Panc1 (cell line): ENCODE measurements at regions of chr10 and their contacts with region 1.

Region 1: DNA sequence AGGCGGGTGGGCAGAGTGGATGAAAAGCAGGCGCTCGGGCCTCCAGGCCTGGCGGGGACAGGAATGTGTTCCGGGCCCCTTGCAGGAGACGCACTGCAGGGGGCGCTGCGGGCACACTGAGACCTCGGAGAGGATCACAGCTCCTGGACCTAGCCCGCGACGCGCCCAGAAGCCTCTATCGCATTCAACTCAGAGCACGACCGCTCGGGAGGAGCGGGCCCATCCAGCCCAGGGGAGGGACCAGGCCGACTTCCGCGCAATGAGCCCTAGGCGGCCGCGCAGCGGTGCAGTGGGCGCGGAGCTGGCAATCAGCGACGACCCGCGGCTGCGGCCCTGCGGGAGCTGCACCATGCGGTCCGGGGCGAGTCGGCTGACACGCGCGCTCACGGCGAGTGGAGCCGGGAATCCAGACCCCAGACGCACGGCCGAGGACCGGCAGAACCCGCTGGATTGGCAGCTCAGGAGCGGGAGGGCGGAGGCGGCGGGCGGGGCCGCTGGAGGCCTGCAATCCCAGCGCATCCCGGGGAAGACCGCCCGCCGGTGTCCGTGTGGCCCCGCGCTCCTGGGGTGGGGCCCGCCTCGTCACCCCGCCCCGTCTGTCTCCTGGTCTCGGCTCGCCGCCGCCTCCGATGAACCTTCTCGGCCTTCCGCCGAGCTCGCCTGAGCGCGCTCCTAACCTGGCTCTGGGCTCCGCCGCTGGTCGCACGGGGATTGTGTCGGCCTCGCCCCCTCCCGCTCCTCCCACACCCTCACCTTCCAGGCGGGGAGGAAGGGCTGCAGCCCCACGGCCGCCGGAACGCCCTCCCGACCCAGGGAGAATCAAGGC is 33.5 kb upstream of the GRID1 start:
- DNase-seq: peak; percentile 78
- ATAC-seq: peak; percentile 97
- H3K4me3 ChIP-seq: peak overlapping the region; percentile 77 to 80
- H3K27ac ChIP-seq: peak overlapping the region; percentile 80
- H3K4me1 ChIP-seq: peaks cover 25% of the 10 kb centered on the region
- H3K27me3 ChIP-seq: no peaks in the 10 kb centered on the region
- CTCF ChIP-seq: peak; percentile 99

Region 2: GRCh38 chr10:86225103-86225782 is 174.8 kb before region 1 on chr10:
- CTCF ChIA-PET with region 1: no interaction called
- POLR2A ChIA-PET with region 1: no interaction called
- in situ Hi-C with region 1: no loop called
- intact Hi-C with region 1: no loop called
- DNase-seq: no peak
- ATAC-seq: no peak
- H3K4me3 ChIP-seq: no peak overlapping the region
- H3K27ac ChIP-seq: no peak overlapping the region
- H3K4me1 ChIP-seq: no peaks in the 10 kb centered on the region
- H3K27me3 ChIP-seq: no peaks in the 10 kb centered on the region
- CTCF ChIP-seq: no peak

Region 3: DNA sequence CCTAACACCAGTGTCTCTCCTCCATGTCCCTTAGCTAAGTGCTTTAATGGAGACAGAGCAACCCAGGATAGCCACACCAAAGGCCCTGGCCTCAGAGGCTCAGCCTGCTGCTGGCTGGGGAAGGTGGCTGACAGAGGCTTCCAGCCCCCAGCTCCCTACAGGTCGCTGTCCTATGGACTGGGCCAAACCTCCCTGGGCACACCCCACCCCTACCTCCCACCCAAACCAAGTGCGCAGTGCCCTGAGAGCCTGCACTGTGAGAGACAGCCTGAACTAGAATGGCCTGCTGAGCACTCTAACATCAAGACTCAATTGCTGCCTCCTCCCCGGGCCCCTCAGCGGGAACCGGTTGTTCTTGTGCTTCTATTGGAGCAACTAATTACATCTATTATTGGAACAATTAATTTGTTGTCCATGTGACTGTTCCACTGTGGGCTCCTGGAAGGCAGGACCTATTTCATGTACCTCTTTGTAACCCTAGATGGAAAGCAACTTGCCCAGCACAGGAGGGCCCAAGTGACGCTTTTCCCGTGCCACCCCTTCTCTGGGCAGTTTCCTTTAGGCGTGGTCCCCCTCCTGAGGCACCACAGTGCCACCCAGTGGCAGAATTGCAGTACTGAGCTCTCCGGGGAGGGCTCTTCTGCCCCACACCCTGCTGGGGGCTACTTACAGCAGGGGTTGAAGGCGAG is 185.1 kb after region 1 on chr10:
- CTCF ChIA-PET with region 1: interaction called, 8 read pairs
- POLR2A ChIA-PET with region 1: no interaction called
- in situ Hi-C with region 1: no loop called
- intact Hi-C with region 1: loop called (anchors 1 kb)
- DNase-seq: peak; percentile 64
- ATAC-seq: peak; percentile 96
- H3K4me3 ChIP-seq: no peak overlapping the region
- H3K27ac ChIP-seq: peak overlapping the region; percentile 30
- H3K4me1 ChIP-seq: no peaks in the 10 kb centered on the region
- H3K27me3 ChIP-seq: no peaks in the 10 kb centered on the region
- CTCF ChIP-seq: peak; percentile 98